Activated B cell treated with CpG ODN at 0.5 μM for 24 hours (primary cell): ENCODE measurements at regions of chrX and their contacts with region 1.

Region 1: DNA sequence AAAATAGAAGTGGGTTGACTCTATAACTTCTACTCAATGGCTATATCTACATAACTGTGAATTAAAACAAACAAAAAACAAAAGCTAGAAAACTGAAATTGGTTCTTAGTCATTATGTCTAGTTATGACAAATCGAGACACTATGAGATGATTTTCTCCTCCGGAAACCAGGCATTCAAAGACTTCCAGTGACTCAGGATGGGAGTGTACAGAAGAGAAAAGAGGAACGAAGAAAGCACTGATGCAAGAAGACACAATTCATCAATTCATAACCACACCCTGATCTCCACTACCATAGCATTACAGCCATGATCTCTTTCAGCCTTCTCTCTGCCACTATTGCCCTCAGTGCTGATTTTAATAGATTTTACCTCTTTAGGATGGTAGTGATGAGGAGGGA is 253.6 kb downstream of the CBLL2 start:
- DNase-seq: no peak
- ATAC-seq: peak; percentile 98
- H3K4me3 Mint-ChIP-seq: peak overlapping the region; percentile 70
- H3K27ac Mint-ChIP-seq: peak overlapping the region; percentile 89
- H3K4me1 Mint-ChIP-seq: peaks cover 35% of the 10 kb centered on the region
- H3K27me3 Mint-ChIP-seq: no peaks in the 10 kb centered on the region
- CTCF ChIP-seq: no peak

Region 2: GRCh38 chrX:22053481-22053880 is 472.9 kb before region 1 on chrX:
- CTCF ChIA-PET with region 1: no interaction called
- POLR2A ChIA-PET with region 1: no interaction called
- intact Hi-C with region 1: loop called (anchors 2 kb)
- DNase-seq: no peak
- ATAC-seq: no peak
- H3K4me3 Mint-ChIP-seq: no peak overlapping the region
- H3K27ac Mint-ChIP-seq: no peak overlapping the region
- H3K4me1 Mint-ChIP-seq: peaks cover 26% of the 10 kb centered on the region
- H3K27me3 Mint-ChIP-seq: no peaks in the 10 kb centered on the region
- CTCF ChIP-seq: no peak

Region 3: GRCh38 chrX:22467571-22467970 is 58.8 kb before region 1 on chrX:
- CTCF ChIA-PET with region 1: no interaction called
- POLR2A ChIA-PET with region 1: interaction called, 7 read pairs
- intact Hi-C with region 1: loop called (anchors 2 kb)
- DNase-seq: no peak
- ATAC-seq: no peak
- H3K4me3 Mint-ChIP-seq: no peak overlapping the region
- H3K27ac Mint-ChIP-seq: no peak overlapping the region
- H3K4me1 Mint-ChIP-seq: peaks cover 37% of the 10 kb centered on the region
- H3K27me3 Mint-ChIP-seq: no peaks in the 10 kb centered on the region
- CTCF ChIP-seq: no peak